B cell (primary cell): ENCODE measurements at regions of chr3 and their contacts with region 1.

Region 1: DNA sequence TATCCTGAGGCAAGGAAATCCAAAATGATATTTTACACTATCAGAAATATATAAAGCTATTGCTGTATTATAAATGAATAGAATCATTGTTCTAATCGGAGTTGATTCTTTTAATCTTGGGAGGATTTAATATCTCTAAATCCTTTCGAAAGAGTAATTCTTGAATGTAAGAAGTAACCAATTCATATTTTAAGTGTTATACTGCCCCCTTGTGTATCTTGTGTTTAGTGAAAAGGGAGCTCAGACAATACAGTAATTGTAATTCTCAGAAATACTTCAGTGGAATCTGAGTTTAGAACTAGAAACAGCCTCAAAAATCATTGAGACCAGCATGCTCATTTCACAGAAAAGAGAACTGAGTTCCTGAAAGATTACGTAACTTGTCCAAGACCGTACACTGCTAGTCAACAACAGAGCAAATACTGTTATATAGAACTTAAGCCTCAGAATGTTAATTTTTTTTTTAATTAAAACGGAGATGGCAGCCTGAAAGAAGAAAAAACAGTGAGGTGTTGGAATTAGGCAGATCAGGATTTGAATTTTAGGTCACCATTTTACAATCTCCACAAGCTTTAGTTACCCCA is 42.9 kb downstream of the PLCH1 start:
- DNase-seq: peak; percentile 60
- ATAC-seq: no peak
- H3K4me3 ChIP-seq: no peak overlapping the region
- H3K4me3 Mint-ChIP-seq: no peak overlapping the region
- H3K27ac ChIP-seq: no peak overlapping the region
- H3K27ac Mint-ChIP-seq: no peak overlapping the region
- H3K4me1 ChIP-seq: no peaks in the 10 kb centered on the region
- H3K4me1 Mint-ChIP-seq: no peaks in the 10 kb centered on the region
- H3K27me3 ChIP-seq: peaks cover 0 to 3% (median 0%) of the 10 kb centered on the region in 4 experiments
- H3K27me3 Mint-ChIP-seq: peaks cover 7% of the 10 kb centered on the region
- CTCF ChIP-seq: peak; percentile 89

Region 2: GRCh38 chr3:154334973-154335420 is 1367.0 kb before region 1 on chr3:
- CTCF ChIA-PET with region 1: interaction called, 16 read pairs
- POLR2A ChIA-PET with region 1: no interaction called
- intact Hi-C with region 1: no loop called
- DNase-seq: peak; percentile 52
- ATAC-seq: no peak
- H3K4me3 ChIP-seq: no peak overlapping the region
- H3K4me3 Mint-ChIP-seq: no peak overlapping the region
- H3K27ac ChIP-seq: no peak overlapping the region
- H3K27ac Mint-ChIP-seq: no peak overlapping the region
- H3K4me1 ChIP-seq: no peaks in the 10 kb centered on the region
- H3K4me1 Mint-ChIP-seq: no peaks in the 10 kb centered on the region
- H3K27me3 ChIP-seq: peaks cover 0 to 3% (median 0%) of the 10 kb centered on the region in 4 experiments
- H3K27me3 Mint-ChIP-seq: peaks cover 14% of the 10 kb centered on the region
- CTCF ChIP-seq: peak; percentile 85

Region 3: GRCh38 chr3:155352900-155353490 is 349.0 kb before region 1 on chr3:
- CTCF ChIA-PET with region 1: interaction called, 70 read pairs
- POLR2A ChIA-PET with region 1: no interaction called
- intact Hi-C with region 1: loop called (anchors 1 kb)
- DNase-seq: peak; percentile 33
- ATAC-seq: no peak
- H3K4me3 ChIP-seq: no peak overlapping the region
- H3K4me3 Mint-ChIP-seq: no peak overlapping the region
- H3K27ac ChIP-seq: no peak overlapping the region
- H3K27ac Mint-ChIP-seq: no peak overlapping the region
- H3K4me1 ChIP-seq: no peaks in the 10 kb centered on the region
- H3K4me1 Mint-ChIP-seq: no peaks in the 10 kb centered on the region
- H3K27me3 ChIP-seq: no peaks in the 10 kb centered on the region
- H3K27me3 Mint-ChIP-seq: no peaks in the 10 kb centered on the region
- CTCF ChIP-seq: peak; percentile 59

Region 4: DNA sequence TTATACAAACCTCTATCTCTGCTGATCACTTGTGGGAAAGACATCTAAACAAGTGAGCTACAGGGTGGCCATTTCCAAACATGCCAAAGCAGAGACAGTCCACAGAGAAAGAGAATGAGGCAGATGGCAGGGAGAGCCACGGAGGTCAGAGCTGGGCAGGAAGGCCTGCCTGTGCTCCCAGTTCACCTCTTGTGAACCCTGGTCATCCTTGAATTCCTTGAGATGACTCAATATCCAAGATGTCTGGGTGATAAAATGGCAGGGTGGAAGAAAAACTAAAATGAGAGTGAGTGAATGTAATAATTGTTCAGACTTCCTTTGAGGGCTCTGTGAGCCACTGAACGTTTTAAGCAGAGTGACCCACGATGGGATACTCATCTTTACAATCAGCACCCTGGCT is 61.9 kb before region 1 on chr3:
- CTCF ChIA-PET with region 1: no interaction called
- POLR2A ChIA-PET with region 1: no interaction called
- intact Hi-C with region 1: no loop called
- DNase-seq: no peak
- ATAC-seq: no peak
- H3K4me3 ChIP-seq: no peak overlapping the region
- H3K4me3 Mint-ChIP-seq: no peak overlapping the region
- H3K27ac ChIP-seq: no peak overlapping the region
- H3K27ac Mint-ChIP-seq: no peak overlapping the region
- H3K4me1 ChIP-seq: no peaks in the 10 kb centered on the region
- H3K4me1 Mint-ChIP-seq: no peaks in the 10 kb centered on the region
- H3K27me3 ChIP-seq: peaks cover 0 to 2% (median 0%) of the 10 kb centered on the region in 4 experiments
- H3K27me3 Mint-ChIP-seq: no peaks in the 10 kb centered on the region
- CTCF ChIP-seq: no peak

Region 5: GRCh38 chr3:155712008-155712407 is 10.0 kb after region 1 on chr3:
- CTCF ChIA-PET with region 1: interaction called, 22 read pairs
- POLR2A ChIA-PET with region 1: interaction called, 3 read pairs
- intact Hi-C with region 1: no loop called
- DNase-seq: no peak
- ATAC-seq: no peak
- H3K4me3 ChIP-seq: no peak overlapping the region
- H3K4me3 Mint-ChIP-seq: no peak overlapping the region
- H3K27ac ChIP-seq: no peak overlapping the region
- H3K27ac Mint-ChIP-seq: no peak overlapping the region
- H3K4me1 ChIP-seq: no peaks in the 10 kb centered on the region
- H3K4me1 Mint-ChIP-seq: no peaks in the 10 kb centered on the region
- H3K27me3 ChIP-seq: no peaks in the 10 kb centered on the region
- H3K27me3 Mint-ChIP-seq: no peaks in the 10 kb centered on the region
- CTCF ChIP-seq: no peak